ENCODE measurements at regions of chr15 and their contacts with region 1.

Region 1: DNA sequence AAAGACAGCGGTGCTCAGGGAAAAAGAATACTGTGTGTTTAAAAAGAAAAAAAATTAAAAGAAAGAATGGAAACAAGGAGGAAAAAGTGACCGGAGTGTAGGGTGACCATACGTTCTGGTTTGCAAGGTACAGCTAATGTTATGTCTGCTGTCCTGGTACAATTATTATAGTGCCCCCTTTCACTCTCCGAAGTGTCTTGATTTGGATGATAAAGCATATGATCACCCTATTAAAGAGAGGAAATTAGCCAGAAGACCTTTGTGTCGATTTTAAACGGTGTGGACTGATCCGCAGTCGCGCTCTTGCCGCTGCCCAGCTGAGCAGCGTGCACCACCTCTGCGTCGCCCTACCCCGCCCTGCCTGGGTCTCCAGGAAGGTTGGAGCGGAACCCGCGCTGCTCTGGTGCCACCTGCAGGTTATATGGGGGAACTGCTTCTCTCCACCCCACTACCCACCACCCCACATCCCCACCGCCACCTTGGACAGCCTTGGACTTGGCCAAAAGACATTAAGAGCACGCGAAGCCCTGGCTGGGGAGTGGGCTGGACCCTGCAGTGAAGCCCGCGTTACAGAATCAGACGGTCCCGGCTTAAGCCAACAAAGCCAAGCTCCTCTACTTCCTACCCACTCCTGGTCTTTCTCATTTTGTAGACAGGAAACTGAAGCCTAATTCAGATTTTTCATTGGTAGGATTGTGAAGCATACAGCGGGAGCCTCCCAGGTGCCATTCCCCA is 41.2 kb upstream of the UBE2Q2 start:
- DNase-seq: peak; percentile 15
- H3K4me3 ChIP-seq: peak overlapping the region; percentile 48
- H3K27ac ChIP-seq: no peak overlapping the region
- H3K27me3 ChIP-seq: peaks cover 25% of the 10 kb centered on the region
- CTCF ChIP-seq: peak; percentile 80

Region 2: GRCh38 chr15:75625542-75626347 is 176.3 kb before region 1 on chr15 and contains the start of gene SNUPN:
- CTCF ChIA-PET with region 1: interaction called, 10 read pairs
- POLR2A ChIA-PET with region 1: no interaction called
- DNase-seq: no peak
- H3K4me3 ChIP-seq: peak within 1 kb of the TSS; percentile 88
- H3K27ac ChIP-seq: peak within 1 kb of the TSS; percentile 97
- H3K27me3 ChIP-seq: no peaks in the 10 kb centered on the region
- CTCF ChIP-seq: no peak
- polyA plus RNA-seq, gene SNUPN: 31.1 and 36.6 TPM in 2 replicates

Region 3: GRCh38 chr15:75684642-75685041 is 117.4 kb before region 1 on chr15:
- CTCF ChIA-PET with region 1: interaction called, 41 read pairs
- POLR2A ChIA-PET with region 1: no interaction called
- DNase-seq: no peak
- H3K4me3 ChIP-seq: no peak overlapping the region
- H3K27ac ChIP-seq: no peak overlapping the region
- H3K27me3 ChIP-seq: no peaks in the 10 kb centered on the region
- CTCF ChIP-seq: no peak

Region 4: DNA sequence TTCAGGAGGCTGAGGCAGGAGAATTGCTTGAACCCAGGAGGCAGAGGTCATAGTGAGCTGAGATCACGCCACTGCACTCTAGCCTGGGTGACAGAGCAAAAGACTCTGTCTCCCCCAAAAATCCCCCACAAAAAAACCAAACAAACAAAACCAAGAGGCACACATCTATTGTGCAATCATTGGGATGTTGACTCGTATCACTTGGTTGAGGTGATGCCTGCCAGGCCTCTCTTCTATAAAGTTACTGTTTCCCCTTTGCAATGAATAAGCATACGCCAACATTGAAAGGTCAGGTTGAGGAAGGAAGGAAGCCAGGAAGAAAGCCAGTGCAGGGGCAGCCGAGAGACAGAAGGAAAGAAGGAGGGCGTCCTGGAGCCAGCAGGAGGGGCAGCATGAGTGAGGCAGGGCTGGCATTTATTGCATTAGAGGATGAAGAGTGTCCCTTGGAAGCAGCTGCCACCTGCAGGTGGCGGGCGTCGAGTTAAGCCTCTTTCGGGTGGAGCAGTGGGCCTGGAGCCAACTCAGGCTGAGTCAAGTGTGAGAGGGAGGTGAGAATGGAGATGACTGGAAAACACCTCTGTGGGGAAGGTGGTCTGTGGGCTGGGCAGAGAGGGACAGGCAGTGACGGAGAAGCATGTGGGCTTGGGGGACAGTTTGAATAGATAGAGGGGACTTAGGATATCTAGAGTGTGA is 81.1 kb before region 1 on chr15:
- CTCF ChIA-PET with region 1: no interaction called
- POLR2A ChIA-PET with region 1: no interaction called
- DNase-seq: no peak
- H3K4me3 ChIP-seq: no peak overlapping the region
- H3K27ac ChIP-seq: no peak overlapping the region
- H3K27me3 ChIP-seq: no peaks in the 10 kb centered on the region
- CTCF ChIP-seq: no peak

Region 5: GRCh38 chr15:75732809-75733451 is 69.1 kb before region 1 on chr15:
- CTCF ChIA-PET with region 1: interaction called, 16 read pairs
- POLR2A ChIA-PET with region 1: no interaction called
- DNase-seq: no peak
- H3K4me3 ChIP-seq: no peak overlapping the region
- H3K27ac ChIP-seq: no peak overlapping the region
- H3K27me3 ChIP-seq: no peaks in the 10 kb centered on the region
- CTCF ChIP-seq: peak; percentile 86

Region 6: DNA sequence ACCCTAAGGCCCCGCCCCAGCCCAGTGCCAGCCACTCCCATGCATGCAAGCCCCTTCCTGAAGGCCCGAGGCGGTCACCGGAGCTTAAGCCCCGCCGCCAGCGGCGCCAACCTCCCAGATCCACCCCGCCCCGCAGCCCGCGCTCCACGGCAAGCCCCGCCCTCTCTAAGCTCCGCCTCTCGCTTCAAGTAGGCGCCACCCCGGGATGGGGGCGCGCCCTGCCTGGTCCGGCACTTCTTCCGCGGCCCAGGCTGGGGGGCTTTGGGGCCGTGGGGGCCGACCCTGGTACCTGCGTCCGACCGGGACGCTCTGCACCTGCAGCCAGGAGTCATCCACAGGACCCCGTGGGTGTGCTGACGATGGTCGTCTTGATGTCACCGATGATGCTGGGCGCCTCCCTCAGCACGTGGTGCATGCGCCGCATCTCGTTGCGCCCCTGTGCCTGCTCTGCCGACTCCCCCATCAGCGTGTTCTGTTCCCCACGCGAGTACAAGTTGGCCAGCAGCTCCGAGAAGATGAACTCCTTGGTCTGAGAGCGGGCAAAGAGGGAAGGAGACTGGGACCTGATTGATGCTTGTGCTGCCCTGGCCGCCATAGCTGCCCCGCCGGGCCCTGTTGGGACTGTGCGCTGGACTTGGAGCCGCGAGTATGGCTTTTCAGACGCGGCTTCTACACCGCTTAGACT is 63.2 kb before region 1 on chr15:
- CTCF ChIA-PET with region 1: interaction called, 17 read pairs
- POLR2A ChIA-PET with region 1: no interaction called
- DNase-seq: peak; percentile 66
- H3K4me3 ChIP-seq: peak overlapping the region; percentile 71
- H3K27ac ChIP-seq: no peak overlapping the region
- H3K27me3 ChIP-seq: peaks cover 2% of the 10 kb centered on the region
- CTCF ChIP-seq: no peak

Region 7: DNA sequence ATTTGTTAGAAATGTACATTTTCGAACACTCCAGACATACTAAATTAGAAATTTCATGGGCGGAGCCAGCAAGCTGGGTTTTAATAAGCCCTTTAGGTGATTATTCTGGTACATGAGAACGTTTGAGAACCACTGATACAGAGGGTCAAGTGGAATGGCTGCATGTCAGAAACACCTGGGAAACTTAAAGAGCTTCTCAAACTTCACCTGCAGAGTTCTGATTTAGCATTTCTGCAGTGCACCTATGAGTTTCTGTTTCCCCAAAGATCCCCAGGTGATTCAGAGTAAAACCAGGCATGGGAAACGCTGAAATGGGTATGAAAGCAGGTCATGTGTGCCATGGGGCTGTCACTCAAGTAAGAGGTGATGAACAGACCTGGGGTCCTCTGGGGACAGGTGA is 325.9 kb after region 1 on chr15:
- CTCF ChIA-PET with region 1: no interaction called
- POLR2A ChIA-PET with region 1: no interaction called
- DNase-seq: no peak
- H3K4me3 ChIP-seq: no peak overlapping the region
- H3K27ac ChIP-seq: no peak overlapping the region
- H3K27me3 ChIP-seq: peaks cover 11% of the 10 kb centered on the region
- CTCF ChIP-seq: no peak

Measured in AG04450 (cell line).